ENCODE measurements at regions of chr10 and their contacts with region 1.

Region 1: GRCh38 chr10:28302638-28303488 is at the start of gene MPP7:
- DNase-seq: peak; percentile 95
- H3K4me3 Mint-ChIP-seq: peak within 1 kb of the TSS; percentile 82
- H3K27ac Mint-ChIP-seq: peak within 1 kb of the TSS; percentile 40
- H3K4me1 Mint-ChIP-seq: peaks cover 11% of the 10 kb centered on the region
- H3K27me3 Mint-ChIP-seq: peaks cover 47% of the 10 kb centered on the region
- CTCF ChIP-seq: peak; percentile 30
- total RNA-seq, gene MPP7: 4.6 and 6.6 TPM in 2 replicates

Region 2: GRCh38 chr10:28250782-28251181 is 52.1 kb before region 1 on chr10:
- CTCF ChIA-PET with region 1: interaction called, 17 read pairs
- intact Hi-C with region 1: loop called (anchors 2 kb)
- DNase-seq: no peak
- H3K4me3 Mint-ChIP-seq: no peak overlapping the region
- H3K27ac Mint-ChIP-seq: no peak overlapping the region
- H3K4me1 Mint-ChIP-seq: no peaks in the 10 kb centered on the region
- H3K27me3 Mint-ChIP-seq: no peaks in the 10 kb centered on the region
- CTCF ChIP-seq: peak; percentile 24

Region 3: DNA sequence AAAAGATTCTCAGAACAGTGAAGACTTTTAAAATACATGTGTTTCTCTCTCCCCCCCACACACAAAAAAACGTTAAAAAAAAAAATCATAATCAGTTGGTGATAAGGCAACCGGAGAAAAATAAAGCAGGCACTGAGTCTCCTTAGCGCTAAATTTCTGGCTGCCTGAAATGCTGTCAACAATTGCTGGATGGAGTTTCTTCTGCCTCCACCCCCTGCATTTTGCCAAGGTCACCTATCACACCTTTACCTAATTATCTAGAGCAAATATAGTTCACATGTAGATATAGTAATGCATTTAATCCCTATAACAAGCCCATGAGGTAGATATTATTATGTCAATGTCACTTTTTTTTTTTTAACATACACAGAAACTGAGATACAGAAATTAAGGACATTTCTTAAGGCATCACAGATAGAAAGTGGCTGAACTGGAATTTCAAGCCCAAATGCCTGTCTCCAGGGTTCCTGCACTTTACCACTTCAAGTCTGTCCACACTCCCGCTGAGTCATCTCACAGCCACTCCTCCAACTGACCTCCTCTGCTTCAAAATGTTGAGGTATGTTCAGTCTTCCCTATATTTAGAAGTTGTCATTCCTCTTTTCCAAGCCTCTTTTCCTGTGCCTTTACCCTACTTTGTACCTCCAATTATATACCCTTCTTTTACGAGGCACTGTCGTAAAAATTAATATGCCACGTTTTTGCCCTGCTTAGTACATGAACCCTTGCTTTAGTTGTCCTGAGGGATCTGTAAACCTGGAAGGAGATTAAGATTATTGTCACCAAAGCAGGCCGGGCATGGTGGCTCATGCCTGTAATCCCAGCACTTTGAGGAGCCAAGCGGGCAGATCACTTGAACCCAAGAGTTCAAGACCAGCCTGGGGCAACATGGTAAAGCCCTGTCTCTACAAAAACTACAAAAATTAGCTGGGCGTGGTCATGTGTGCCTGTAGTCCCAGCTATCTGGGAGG is 72.8 kb after region 1 on chr10:
- CTCF ChIA-PET with region 1: interaction called, 24 read pairs
- intact Hi-C with region 1: loop called (anchors 2 kb)
- DNase-seq: peak; percentile 76
- H3K4me3 Mint-ChIP-seq: peak overlapping the region; percentile 33
- H3K27ac Mint-ChIP-seq: peak overlapping the region; percentile 28
- H3K4me1 Mint-ChIP-seq: peaks cover 23% of the 10 kb centered on the region
- H3K27me3 Mint-ChIP-seq: no peaks in the 10 kb centered on the region
- CTCF ChIP-seq: no peak

Region 4: DNA sequence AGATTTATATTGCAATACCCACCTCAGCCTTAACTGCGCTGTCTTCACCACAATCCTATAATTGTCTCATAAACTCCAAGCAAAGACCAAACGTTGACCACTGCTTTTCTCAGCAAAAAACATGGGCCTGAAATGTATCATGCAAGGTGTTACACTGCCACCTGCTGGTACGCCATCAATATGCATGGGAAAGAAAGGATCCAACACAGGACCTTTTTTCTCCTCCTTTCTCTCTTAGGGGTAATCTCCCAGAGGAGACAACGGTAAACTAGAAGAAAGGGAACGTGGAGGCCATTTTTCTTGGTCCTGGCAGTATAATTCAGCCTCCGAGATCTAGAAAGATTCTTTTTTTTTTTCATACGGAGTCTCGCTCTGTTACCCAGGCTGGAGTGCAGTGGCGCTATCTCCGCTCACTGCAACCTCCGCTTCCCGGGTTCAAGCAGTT is 79.1 kb after region 1 on chr10:
- CTCF ChIA-PET with region 1: interaction called, 24 read pairs
- intact Hi-C with region 1: no loop called
- DNase-seq: peak; percentile 85
- H3K4me3 Mint-ChIP-seq: no peak overlapping the region
- H3K27ac Mint-ChIP-seq: no peak overlapping the region
- H3K4me1 Mint-ChIP-seq: peaks cover 5% of the 10 kb centered on the region
- H3K27me3 Mint-ChIP-seq: peaks cover 31% of the 10 kb centered on the region
- CTCF ChIP-seq: peak; percentile 82

Region 5: GRCh38 chr10:28393966-28394568 is 91.2 kb after region 1 on chr10:
- CTCF ChIA-PET with region 1: interaction called, 10 read pairs
- intact Hi-C with region 1: no loop called
- DNase-seq: peak; percentile 65
- H3K4me3 Mint-ChIP-seq: no peak overlapping the region
- H3K27ac Mint-ChIP-seq: no peak overlapping the region
- H3K4me1 Mint-ChIP-seq: peaks cover 9% of the 10 kb centered on the region
- H3K27me3 Mint-ChIP-seq: peaks cover 2% of the 10 kb centered on the region
- CTCF ChIP-seq: peak; percentile 88

Measured in Calu3 (cell line).